SK-N-SH (cell line): ENCODE measurements at regions of chr1 and their contacts with region 1.

Region 1: GRCh38 chr1:44812822-44813543 is 4.7 kb downstream of the BTBD19 start:
- DNase-seq: peak; percentile 70
- H3K4me3 ChIP-seq: peak overlapping the region in 1 of 2 experiments; percentile 38; a peak in 2 of 4 replicates
- H3K27ac ChIP-seq: peak overlapping the region; percentile 36 to 100; a peak in 2 of 4 replicates
- H3K4me1 ChIP-seq: peaks cover 42 to 60% of the 10 kb centered on the region in 2 experiments; a peak in 3 of 4 replicates
- H3K27me3 ChIP-seq: no peaks in the 10 kb centered on the region
- CTCF ChIP-seq: no peak
- EP300 ChIP-seq: no peak
- RAD21 ChIP-seq: no peak

Region 2: DNA sequence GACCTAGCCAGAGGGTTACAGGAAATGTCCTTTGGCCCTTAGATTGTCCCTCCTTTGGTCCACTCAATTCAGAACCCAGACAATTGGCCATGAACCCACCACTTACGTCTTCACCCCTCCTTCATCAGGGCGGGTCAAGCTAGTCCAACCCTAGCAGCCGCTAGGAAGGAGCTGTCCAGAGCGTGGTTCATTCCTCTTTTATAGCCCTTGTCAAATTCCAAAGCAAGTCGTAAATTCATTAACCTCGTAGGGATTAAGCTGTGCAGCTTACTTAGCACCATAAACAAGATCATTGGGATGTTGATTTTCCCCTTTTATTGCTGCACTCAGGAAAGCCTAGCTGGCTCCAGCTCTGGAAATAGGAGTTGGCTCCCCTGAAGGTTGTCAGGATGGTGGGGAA is 228.8 kb before region 1 on chr1:
- CTCF ChIA-PET with region 1: no interaction called
- POLR2A ChIA-PET with region 1: no interaction called
- DNase-seq: no peak
- H3K4me3 ChIP-seq: no peak overlapping the region
- H3K27ac ChIP-seq: no peak overlapping the region
- H3K4me1 ChIP-seq: no peaks in the 10 kb centered on the region
- H3K27me3 ChIP-seq: peaks cover 26% of the 10 kb centered on the region
- CTCF ChIP-seq: no peak
- EP300 ChIP-seq: no peak
- RAD21 ChIP-seq: no peak

Region 3: GRCh38 chr1:44799770-44800584 is 13.0 kb before region 1 on chr1 and contains the start of gene PLK3:
- CTCF ChIA-PET with region 1: interaction called, 11 read pairs
- POLR2A ChIA-PET with region 1: interaction called, 29 read pairs
- DNase-seq: peak; percentile 97
- H3K4me3 ChIP-seq: peak within 1 kb of the TSS; percentile 87 to 96
- H3K27ac ChIP-seq: peak within 1 kb of the TSS; percentile 97 to 100
- H3K4me1 ChIP-seq: peaks cover 16 to 20% of the 10 kb centered on the region in 2 experiments; a peak in 2 of 4 replicates
- H3K27me3 ChIP-seq: no peaks in the 10 kb centered on the region
- CTCF ChIP-seq: peak; percentile 86
- EP300 ChIP-seq: peak in 1 of 2 experiments; percentile 30; a peak in 1 of 4 replicates
- RAD21 ChIP-seq: peak; percentile 72
- polyA plus RNA-seq, gene PLK3: 68.3 and 82.8 TPM in 2 replicates